ENCODE measurements at regions of chr12 and their contacts with region 1.

Region 1: DNA sequence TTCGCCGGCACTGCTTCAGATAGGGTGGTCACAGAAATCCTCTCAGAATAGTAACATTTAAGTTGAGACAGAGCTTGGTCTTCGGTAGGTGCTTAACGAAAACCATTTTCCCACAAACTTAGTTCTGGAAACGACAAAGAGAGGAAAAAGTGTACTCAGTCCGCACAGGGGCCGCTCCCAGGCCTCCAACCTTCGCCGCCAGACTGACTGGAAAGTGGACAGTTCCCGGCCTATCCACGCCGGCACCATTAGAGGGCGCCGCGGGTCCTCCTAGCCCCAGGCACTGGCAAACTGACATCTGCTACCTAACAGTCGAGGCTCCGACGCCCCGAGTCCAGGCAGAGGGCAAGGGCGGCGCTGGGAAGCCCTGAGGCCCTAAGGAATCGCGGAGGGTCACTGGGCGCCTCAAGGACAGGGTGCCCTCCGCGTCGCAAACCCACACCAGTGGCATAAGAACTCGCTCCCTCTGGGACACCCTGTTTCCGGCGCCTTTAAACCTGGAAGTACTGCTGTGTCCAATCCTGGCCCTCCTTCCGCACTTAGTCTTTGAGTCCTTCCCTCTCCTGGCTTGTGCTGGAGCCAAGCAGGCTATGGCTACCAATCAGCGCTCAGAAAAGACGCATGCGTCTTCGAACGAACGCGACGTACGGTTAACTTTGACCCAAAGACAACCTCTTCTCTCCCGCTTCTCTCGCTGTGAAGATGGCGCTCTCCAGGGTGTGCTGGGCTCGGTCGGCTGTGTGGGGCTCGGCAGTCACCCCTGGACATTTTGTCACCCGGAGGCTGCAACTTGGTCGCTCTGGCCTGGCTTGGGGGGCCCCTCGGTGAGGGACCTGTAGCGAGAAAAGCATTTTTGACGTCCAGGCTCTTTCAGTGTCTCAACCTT is at the start of gene LETMD1:
- DNase-seq: peak; percentile 90 to 94 (median 91)
- H3K4me3 ChIP-seq: peak within 1 kb of the TSS; percentile 60
- H3K27ac ChIP-seq: peak within 1 kb of the TSS; percentile 54 to 91
- H3K4me1 ChIP-seq: no peaks in the 10 kb centered on the region
- H3K27me3 ChIP-seq: no peaks in the 10 kb centered on the region
- CTCF ChIP-seq: peak; percentile 91 to 92 (median 92)
- EP300 ChIP-seq: no peak
- POLR2A ChIP-seq: peak; percentile 46
- total RNA-seq, gene LETMD1: 53.5 to 75.0 (median 68.4) TPM

Region 2: GRCh38 chr12:51150777-51151176 is 102.9 kb after region 1 on chr12:
- intact Hi-C with region 1: no loop called
- DNase-seq: no peak
- H3K4me3 ChIP-seq: no peak overlapping the region
- H3K27ac ChIP-seq: no peak overlapping the region
- H3K4me1 ChIP-seq: no peaks in the 10 kb centered on the region
- H3K27me3 ChIP-seq: no peaks in the 10 kb centered on the region
- CTCF ChIP-seq: no peak
- EP300 ChIP-seq: no peak
- POLR2A ChIP-seq: no peak

Region 3: DNA sequence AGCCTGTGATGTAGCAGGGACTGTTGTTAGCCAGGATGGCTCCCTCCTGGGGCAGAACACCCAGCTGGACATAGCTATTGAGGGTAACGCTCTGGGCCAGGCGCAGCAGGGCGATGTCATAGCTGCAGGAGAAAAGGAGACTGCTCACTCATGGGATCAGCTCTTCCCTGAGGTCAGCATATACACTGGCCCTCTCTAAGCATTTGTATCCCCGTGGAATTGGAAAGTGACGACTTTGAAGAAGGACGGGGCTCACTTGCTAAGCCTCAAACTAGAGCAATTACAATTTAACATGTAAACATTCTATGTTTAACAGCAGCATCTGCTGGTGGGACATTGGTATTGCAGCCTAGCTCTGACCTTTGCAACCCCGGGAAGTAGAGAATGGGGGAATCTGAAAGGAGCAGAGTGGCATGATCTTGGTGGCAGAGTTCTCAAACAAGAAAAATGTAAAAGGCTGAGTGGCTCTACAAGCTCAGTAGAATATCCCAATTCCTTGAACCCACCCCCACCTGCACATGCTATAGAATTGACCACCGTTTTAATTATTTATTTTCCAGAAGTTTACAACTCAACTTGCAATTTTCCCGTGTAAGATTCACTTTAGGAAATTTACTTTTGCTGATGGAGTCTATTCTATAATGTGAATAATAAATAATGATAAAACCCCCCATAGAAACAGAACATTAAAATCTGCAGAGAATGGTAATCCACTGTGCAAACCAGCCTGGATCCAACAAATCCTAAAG is 293.5 kb after region 1 on chr12:
- intact Hi-C with region 1: loop called in 1 of 4 experiments (anchors 10 kb)
- DNase-seq: peak; percentile 51 to 74 (median 60)
- H3K4me3 ChIP-seq: no peak overlapping the region
- H3K27ac ChIP-seq: no peak overlapping the region
- H3K4me1 ChIP-seq: peaks cover 3% of the 10 kb centered on the region
- H3K27me3 ChIP-seq: no peaks in the 10 kb centered on the region
- CTCF ChIP-seq: peak; percentile 46 to 95 (median 94)
- EP300 ChIP-seq: no peak
- POLR2A ChIP-seq: no peak